ENCODE measurements at regions of chr12 and their contacts with region 1.

Region 1: GRCh38 chr12:108884116-108885012 is 4.5 kb downstream of the DAO start:
- DNase-seq: peak; percentile 80
- ATAC-seq: peak; percentile 73
- H3K4me3 Mint-ChIP-seq: no peak overlapping the region
- H3K27ac Mint-ChIP-seq: no peak overlapping the region
- H3K4me1 Mint-ChIP-seq: peaks cover 8% of the 10 kb centered on the region
- H3K27me3 Mint-ChIP-seq: no peaks in the 10 kb centered on the region
- CTCF ChIP-seq: peak; percentile 60

Region 2: DNA sequence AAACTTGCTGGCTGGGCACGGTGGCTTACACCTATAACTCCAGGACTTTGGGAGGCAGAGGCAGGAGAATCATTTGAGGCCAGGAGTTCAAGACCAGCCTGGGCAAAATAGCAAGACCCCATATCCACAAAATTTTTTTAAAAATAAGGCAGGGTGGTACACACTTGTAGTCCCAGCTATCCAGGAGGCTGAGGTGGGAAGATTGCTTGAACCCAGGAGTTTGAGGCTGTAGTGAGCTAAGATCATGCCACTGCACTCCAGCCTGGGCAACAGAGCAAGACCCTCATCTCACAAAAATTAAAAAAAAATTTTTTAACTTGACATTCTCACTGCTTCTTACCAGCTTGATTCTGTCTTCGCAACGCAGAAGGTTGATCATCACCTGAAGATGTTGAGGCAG is 66.5 kb before region 1 on chr12:
- CTCF ChIA-PET with region 1: no interaction called
- POLR2A ChIA-PET with region 1: no interaction called
- DNase-seq: no peak
- ATAC-seq: no peak
- H3K4me3 Mint-ChIP-seq: no peak overlapping the region
- H3K27ac Mint-ChIP-seq: no peak overlapping the region
- H3K4me1 Mint-ChIP-seq: peaks cover 14% of the 10 kb centered on the region
- H3K27me3 Mint-ChIP-seq: no peaks in the 10 kb centered on the region
- CTCF ChIP-seq: no peak

Region 3: GRCh38 chr12:108868781-108869180 is 15.6 kb before region 1 on chr12:
- CTCF ChIA-PET with region 1: interaction called, 12 read pairs
- POLR2A ChIA-PET with region 1: no interaction called
- DNase-seq: no peak
- ATAC-seq: no peak
- H3K4me3 Mint-ChIP-seq: no peak overlapping the region
- H3K27ac Mint-ChIP-seq: no peak overlapping the region
- H3K4me1 Mint-ChIP-seq: no peaks in the 10 kb centered on the region
- H3K27me3 Mint-ChIP-seq: peaks cover 2% of the 10 kb centered on the region; the same call in 1 of the 2 replicates
- CTCF ChIP-seq: no peak

Region 4: GRCh38 chr12:108896366-108897216 is 12.2 kb after region 1 on chr12:
- CTCF ChIA-PET with region 1: no interaction called
- POLR2A ChIA-PET with region 1: no interaction called
- DNase-seq: no peak
- ATAC-seq: no peak
- H3K4me3 Mint-ChIP-seq: no peak overlapping the region
- H3K27ac Mint-ChIP-seq: no peak overlapping the region
- H3K4me1 Mint-ChIP-seq: no peaks in the 10 kb centered on the region
- H3K27me3 Mint-ChIP-seq: peaks cover 4% of the 10 kb centered on the region
- CTCF ChIP-seq: no peak

Region 5: DNA sequence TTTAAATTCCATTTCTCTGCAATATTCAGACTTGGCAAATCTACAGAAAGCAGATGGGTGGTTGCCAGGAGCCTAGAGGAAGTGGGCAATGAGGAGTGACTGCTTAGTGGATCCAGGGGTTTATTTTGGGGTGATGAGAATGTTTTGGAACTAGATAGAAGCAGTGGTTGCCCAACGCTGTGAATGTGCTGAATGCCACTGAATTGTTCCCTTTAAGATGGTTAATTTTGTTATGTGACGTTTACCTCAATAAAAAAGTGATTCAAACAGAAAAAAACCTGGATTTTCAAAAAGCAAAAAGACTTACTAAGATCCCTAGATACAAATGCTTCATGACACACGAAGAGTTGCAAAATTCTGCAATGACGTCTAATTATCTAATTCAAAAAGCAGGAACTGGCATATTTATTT is 29.8 kb after region 1 on chr12:
- CTCF ChIA-PET with region 1: no interaction called
- POLR2A ChIA-PET with region 1: no interaction called
- DNase-seq: no peak
- ATAC-seq: no peak
- H3K4me3 Mint-ChIP-seq: no peak overlapping the region
- H3K27ac Mint-ChIP-seq: no peak overlapping the region
- H3K4me1 Mint-ChIP-seq: peaks cover 2% of the 10 kb centered on the region
- H3K27me3 Mint-ChIP-seq: peaks cover 3% of the 10 kb centered on the region; the same call in 1 of the 2 replicates
- CTCF ChIP-seq: no peak

Region 6: GRCh38 chr12:108950991-108951739 is 66.8 kb after region 1 on chr12:
- CTCF ChIA-PET with region 1: interaction called, 27 read pairs
- POLR2A ChIA-PET with region 1: no interaction called
- DNase-seq: peak; percentile 74
- ATAC-seq: peak; percentile 92
- H3K4me3 Mint-ChIP-seq: no peak overlapping the region
- H3K27ac Mint-ChIP-seq: no peak overlapping the region
- H3K4me1 Mint-ChIP-seq: 0 out of 2 replicates have a peak, but pooled peaks cover 2% of the 10 kb centered on the region
- H3K27me3 Mint-ChIP-seq: peaks cover 2% of the 10 kb centered on the region; the same call in 1 of the 2 replicates
- CTCF ChIP-seq: peak; percentile 90